Activated B cell treated with CpG ODN at 0.5 μM for 24 hours (primary cell): ENCODE measurements at regions of chr16 and their contacts with region 1.

Region 1: GRCh38 chr16:68085259-68086071 is at the start of gene NFATC3:
- DNase-seq: peak; percentile 96
- ATAC-seq: peak; percentile 78
- H3K4me3 Mint-ChIP-seq: peak within 1 kb of the TSS; percentile 98
- H3K27ac Mint-ChIP-seq: peak within 1 kb of the TSS; percentile 97
- H3K4me1 Mint-ChIP-seq: peaks cover 77% of the 10 kb centered on the region
- H3K27me3 Mint-ChIP-seq: no peaks in the 10 kb centered on the region
- CTCF ChIP-seq: no peak
- total RNA-seq, gene NFATC3: 64.8 and 72.0 TPM in 2 replicates

Region 2: GRCh38 chr16:67841764-67842508 is 243.5 kb before region 1 on chr16 and contains the start of gene THAP11:
- CTCF ChIA-PET with region 1: no interaction called
- POLR2A ChIA-PET with region 1: interaction called, 6 read pairs
- intact Hi-C with region 1: loop called (anchors 1 kb)
- DNase-seq: peak; percentile 95
- ATAC-seq: peak; percentile 54
- H3K4me3 Mint-ChIP-seq: peak within 1 kb of the TSS; percentile 95
- H3K27ac Mint-ChIP-seq: peak within 1 kb of the TSS; percentile 95
- H3K4me1 Mint-ChIP-seq: peaks cover 43% of the 10 kb centered on the region
- H3K27me3 Mint-ChIP-seq: no peaks in the 10 kb centered on the region
- CTCF ChIP-seq: peak; percentile 38
- total RNA-seq, gene THAP11: 24.2 and 24.9 TPM in 2 replicates

Region 3: GRCh38 chr16:67975321-67976105 is 110.0 kb before region 1 on chr16:
- CTCF ChIA-PET with region 1: no interaction called
- POLR2A ChIA-PET with region 1: no interaction called
- intact Hi-C with region 1: no loop called
- DNase-seq: no peak
- ATAC-seq: no peak
- H3K4me3 Mint-ChIP-seq: no peak overlapping the region
- H3K27ac Mint-ChIP-seq: no peak overlapping the region
- H3K4me1 Mint-ChIP-seq: peaks cover 8% of the 10 kb centered on the region
- H3K27me3 Mint-ChIP-seq: no peaks in the 10 kb centered on the region
- CTCF ChIP-seq: no peak

Region 4: GRCh38 chr16:68064791-68065365 is 20.6 kb before region 1 on chr16:
- CTCF ChIA-PET with region 1: interaction called, 17 read pairs
- POLR2A ChIA-PET with region 1: interaction called, 211 read pairs
- intact Hi-C with region 1: loop called (anchors 2 kb)
- DNase-seq: peak; percentile 52
- ATAC-seq: peak; percentile 93
- H3K4me3 Mint-ChIP-seq: no peak overlapping the region
- H3K27ac Mint-ChIP-seq: no peak overlapping the region
- H3K4me1 Mint-ChIP-seq: peaks cover 27% of the 10 kb centered on the region
- H3K27me3 Mint-ChIP-seq: no peaks in the 10 kb centered on the region
- CTCF ChIP-seq: no peak

Region 5: DNA sequence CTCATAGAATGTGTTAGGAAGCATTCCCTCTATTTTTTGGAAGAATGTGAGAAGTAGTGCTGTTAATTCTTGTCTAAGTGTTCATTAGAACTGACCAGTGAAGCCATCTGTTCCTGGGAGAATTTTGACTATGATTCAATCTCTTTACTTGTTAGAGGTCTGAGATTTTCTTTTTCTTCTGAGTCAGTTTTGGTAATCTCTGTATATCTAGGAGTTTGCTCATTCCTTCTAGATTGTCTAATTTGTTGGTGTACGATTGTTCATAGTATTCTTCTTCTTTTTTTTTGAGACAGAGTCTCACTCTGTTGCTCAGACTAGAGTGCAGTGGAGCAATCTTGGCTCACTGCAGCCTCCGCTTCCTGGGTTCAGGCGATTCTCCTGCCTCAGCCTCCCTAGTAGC is 20.1 kb after region 1 on chr16:
- CTCF ChIA-PET with region 1: interaction called, 4 read pairs
- POLR2A ChIA-PET with region 1: interaction called, 12 read pairs
- intact Hi-C with region 1: no loop called
- DNase-seq: no peak
- ATAC-seq: no peak
- H3K4me3 Mint-ChIP-seq: no peak overlapping the region
- H3K27ac Mint-ChIP-seq: no peak overlapping the region
- H3K4me1 Mint-ChIP-seq: peaks cover 83% of the 10 kb centered on the region
- H3K27me3 Mint-ChIP-seq: no peaks in the 10 kb centered on the region
- CTCF ChIP-seq: no peak

Region 6: GRCh38 chr16:68237243-68238028 is 152.0 kb after region 1 on chr16:
- CTCF ChIA-PET with region 1: no interaction called
- POLR2A ChIA-PET with region 1: interaction called, 12 read pairs
- intact Hi-C with region 1: no loop called
- DNase-seq: peak; percentile 84
- ATAC-seq: peak; percentile 83
- H3K4me3 Mint-ChIP-seq: peak overlapping the region; percentile 93
- H3K27ac Mint-ChIP-seq: peak overlapping the region; percentile 79
- H3K4me1 Mint-ChIP-seq: peaks cover 33% of the 10 kb centered on the region
- H3K27me3 Mint-ChIP-seq: no peaks in the 10 kb centered on the region
- CTCF ChIP-seq: no peak